Panc1 (cell line): ENCODE measurements at regions of chr15 and their contacts with region 1.

Region 1: GRCh38 chr15:74768771-74769342 is 13.0 kb upstream of the CSK start:
- DNase-seq: no peak
- ATAC-seq: peak; percentile 69
- H3K4me3 ChIP-seq: no peak overlapping the region; a peak in 1 of 4 replicates
- H3K27ac ChIP-seq: no peak overlapping the region
- H3K4me1 ChIP-seq: no peaks in the 10 kb centered on the region; the same call in 1 of the 2 replicates
- H3K27me3 ChIP-seq: no peaks in the 10 kb centered on the region
- CTCF ChIP-seq: peak; percentile 89

Region 2: DNA sequence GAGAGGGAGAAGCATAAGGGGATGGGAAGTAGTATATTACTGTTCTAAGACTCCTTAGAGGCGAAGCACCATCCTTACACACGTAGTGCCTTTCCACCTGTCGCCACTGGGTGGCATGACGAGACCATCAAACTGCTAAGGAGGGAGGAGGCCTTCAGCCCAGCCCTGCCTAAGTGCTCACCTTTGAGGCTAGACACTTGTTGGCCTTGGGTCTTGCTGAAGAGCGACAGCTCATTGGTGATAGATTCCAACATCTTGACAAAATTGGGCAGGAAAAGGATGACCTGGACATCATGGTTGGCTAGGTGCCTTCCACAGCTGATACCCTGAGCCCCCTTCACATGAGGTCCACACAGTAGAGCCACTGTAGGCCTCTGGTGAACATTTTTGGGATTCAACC is 133.6 kb before region 1 on chr15:
- CTCF ChIA-PET with region 1: interaction called, 106 read pairs
- POLR2A ChIA-PET with region 1: no interaction called
- in situ Hi-C with region 1: loop called (anchors 25 kb)
- intact Hi-C with region 1: loop called (anchors 1 kb)
- DNase-seq: peak; percentile 69
- ATAC-seq: peak; percentile 84
- H3K4me3 ChIP-seq: no peak overlapping the region
- H3K27ac ChIP-seq: no peak overlapping the region
- H3K4me1 ChIP-seq: no peaks in the 10 kb centered on the region
- H3K27me3 ChIP-seq: no peaks in the 10 kb centered on the region
- CTCF ChIP-seq: peak; percentile 90

Region 3: DNA sequence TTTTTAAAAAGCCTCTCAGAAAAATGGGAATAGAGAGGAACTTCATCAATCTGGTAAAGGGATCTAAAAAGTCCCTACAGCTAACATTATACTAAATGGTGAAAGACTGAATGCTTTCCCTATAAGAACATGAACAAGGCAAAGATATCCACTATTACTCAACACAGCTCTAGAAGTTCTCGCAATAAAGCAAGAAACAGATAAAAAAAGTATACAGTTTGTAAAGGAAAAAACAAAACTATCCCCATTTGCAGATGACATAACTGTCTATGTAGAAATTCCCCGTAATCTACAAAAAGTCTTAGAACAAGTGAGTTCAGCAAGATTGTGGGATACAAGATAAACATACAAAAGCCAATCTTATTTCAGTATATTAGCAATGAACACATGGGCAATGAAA is 88.4 kb before region 1 on chr15:
- CTCF ChIA-PET with region 1: interaction called, 14 read pairs
- POLR2A ChIA-PET with region 1: no interaction called
- in situ Hi-C with region 1: no loop called
- intact Hi-C with region 1: no loop called
- DNase-seq: no peak
- ATAC-seq: no peak
- H3K4me3 ChIP-seq: no peak overlapping the region
- H3K27ac ChIP-seq: no peak overlapping the region
- H3K4me1 ChIP-seq: no peaks in the 10 kb centered on the region
- H3K27me3 ChIP-seq: no peaks in the 10 kb centered on the region
- CTCF ChIP-seq: no peak

Region 4: GRCh38 chr15:74781431-74782258 is 12.8 kb after region 1 on chr15 and contains the start of gene CSK:
- CTCF ChIA-PET with region 1: interaction called, 10 read pairs
- POLR2A ChIA-PET with region 1: no interaction called
- in situ Hi-C with region 1: no loop called
- intact Hi-C with region 1: no loop called
- DNase-seq: no peak
- ATAC-seq: peak; percentile 88
- H3K4me3 ChIP-seq: peak within 1 kb of the TSS; percentile 87 to 90
- H3K27ac ChIP-seq: peak within 1 kb of the TSS; percentile 87
- H3K4me1 ChIP-seq: peaks cover 43% of the 10 kb centered on the region
- H3K27me3 ChIP-seq: no peaks in the 10 kb centered on the region
- CTCF ChIP-seq: peak; percentile 99
- total RNA-seq, gene CSK: 81.4 TPM

Region 5: DNA sequence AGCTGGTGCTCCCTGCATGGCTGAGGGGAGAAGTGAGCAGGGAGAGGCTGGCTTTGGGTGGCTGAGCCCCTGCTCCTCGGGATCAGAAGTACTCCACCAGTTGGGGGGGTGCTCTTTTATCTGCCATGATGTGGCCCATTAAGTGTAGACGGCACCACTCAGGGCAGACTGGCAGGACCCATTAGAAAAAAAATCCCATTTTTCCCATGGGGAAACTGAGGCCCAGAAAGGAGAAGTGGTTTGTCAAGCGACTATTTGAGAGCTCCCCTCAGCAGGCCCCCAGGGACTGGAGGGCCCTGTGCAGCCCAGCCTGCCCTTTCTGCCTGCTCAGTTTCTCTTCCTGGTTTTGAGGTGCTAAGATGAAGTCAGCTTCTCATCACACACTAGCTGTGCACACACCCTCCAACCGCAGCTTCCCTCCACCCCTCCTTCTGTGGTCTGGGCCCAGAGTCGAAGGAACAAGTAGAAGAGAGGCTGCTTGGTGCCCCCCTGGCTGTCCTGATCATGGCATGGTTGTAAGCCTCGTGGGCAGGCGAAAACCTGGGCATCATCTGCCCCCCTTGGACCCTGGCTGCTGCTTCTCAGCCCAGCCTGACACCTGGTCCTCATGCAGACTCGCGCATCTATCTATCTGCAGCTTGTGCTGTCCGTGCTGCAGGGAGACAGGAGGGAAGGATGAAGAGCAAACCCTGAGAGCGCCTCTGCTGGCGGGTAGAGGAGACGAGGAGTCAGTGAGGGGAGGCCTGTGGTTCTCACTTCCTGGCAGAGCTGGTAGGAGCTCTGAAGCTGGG is 18.6 kb after region 1 on chr15:
- CTCF ChIA-PET with region 1: interaction called, 10 read pairs
- POLR2A ChIA-PET with region 1: no interaction called
- in situ Hi-C with region 1: no loop called
- intact Hi-C with region 1: no loop called
- DNase-seq: peak; percentile 24
- ATAC-seq: peak; percentile 87
- H3K4me3 ChIP-seq: no peak overlapping the region
- H3K27ac ChIP-seq: no peak overlapping the region
- H3K4me1 ChIP-seq: peaks cover 60% of the 10 kb centered on the region
- H3K27me3 ChIP-seq: no peaks in the 10 kb centered on the region
- CTCF ChIP-seq: peak; percentile 87

Region 6: DNA sequence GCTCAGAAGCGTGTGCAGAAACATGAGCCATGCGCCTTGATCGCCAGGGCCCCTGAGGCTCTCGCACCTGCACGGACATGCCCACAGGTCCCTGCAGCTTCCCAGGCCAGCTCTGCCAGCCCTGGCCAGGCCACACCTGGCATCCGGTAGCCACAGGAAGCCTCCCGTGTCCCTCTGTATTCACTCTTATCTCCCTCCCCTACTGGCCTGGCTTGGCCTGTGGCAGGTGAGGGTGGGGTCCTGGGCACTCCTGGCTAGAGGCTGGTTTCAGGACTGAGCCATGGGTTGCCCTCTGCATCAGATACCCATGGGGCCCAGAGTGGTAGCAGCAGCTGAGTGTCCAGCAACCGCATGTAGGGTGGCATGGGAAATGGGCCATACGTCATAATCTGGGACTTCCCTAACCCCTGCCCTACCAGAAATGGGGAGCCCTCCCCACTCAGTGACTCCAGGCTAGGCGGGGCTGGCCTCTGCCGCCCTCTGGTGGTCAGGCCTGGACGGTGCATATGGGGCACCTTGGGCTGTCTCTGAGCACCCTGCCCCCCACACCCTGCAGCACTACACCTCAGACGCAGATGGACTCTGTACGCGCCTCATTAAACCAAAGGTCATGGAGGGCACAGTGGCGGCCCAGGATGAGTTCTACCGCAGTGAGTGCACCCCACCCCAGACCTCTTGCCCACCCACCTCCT is 31.1 kb after region 1 on chr15:
- CTCF ChIA-PET with region 1: interaction called, 4 read pairs
- POLR2A ChIA-PET with region 1: no interaction called
- in situ Hi-C with region 1: no loop called
- intact Hi-C with region 1: loop called (anchors 2 kb)
- DNase-seq: peak; percentile 45
- ATAC-seq: peak; percentile 95
- H3K4me3 ChIP-seq: no peak overlapping the region
- H3K27ac ChIP-seq: no peak overlapping the region
- H3K4me1 ChIP-seq: peaks cover 7% of the 10 kb centered on the region; the same call in 1 of the 2 replicates
- H3K27me3 ChIP-seq: no peaks in the 10 kb centered on the region
- CTCF ChIP-seq: peak; percentile 99

Region 7: DNA sequence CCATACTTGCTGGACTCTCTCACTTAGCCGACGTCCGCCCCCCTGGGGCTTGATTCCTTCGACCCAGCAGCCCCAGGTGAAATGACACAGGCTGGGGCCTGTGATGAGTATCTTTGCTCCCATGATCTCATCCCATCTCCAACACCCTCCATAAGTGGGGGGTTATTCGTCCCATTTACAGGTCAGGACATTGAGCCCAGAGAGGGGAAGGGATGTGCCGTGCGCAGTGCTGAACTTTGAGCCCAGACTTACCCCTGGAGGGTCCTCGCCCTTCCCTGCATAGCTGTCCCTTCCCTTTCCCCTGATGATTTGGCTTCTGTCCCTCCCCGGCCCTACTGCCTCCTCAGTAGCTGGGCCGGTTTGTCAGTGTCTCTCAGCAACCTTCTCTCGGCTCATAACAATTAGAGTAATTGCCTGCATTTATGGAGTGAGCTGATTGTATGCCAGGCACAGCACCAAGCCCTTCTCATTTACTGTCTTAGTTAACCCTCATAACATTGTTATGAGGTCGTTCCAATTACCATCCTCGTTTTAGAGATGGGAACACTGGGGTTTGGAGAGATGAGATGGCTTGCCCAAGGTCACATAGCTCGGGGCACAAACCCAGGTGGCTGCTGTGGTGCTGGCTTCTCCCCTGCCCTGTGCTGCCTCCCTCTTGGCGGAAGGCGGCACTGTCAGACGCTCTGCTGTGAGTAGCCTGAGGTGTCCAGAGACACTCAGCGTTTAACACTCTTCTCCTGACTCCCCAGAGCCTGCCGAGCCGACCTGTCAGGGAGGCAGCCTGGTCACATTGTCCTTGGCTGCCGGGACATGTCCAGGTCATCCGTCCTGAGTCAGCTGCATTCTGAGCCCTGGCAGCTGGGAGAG is 48.2 kb after region 1 on chr15:
- CTCF ChIA-PET with region 1: interaction called, 15 read pairs
- POLR2A ChIA-PET with region 1: no interaction called
- in situ Hi-C with region 1: no loop called
- intact Hi-C with region 1: no loop called
- DNase-seq: no peak
- ATAC-seq: peak; percentile 74
- H3K4me3 ChIP-seq: no peak overlapping the region
- H3K27ac ChIP-seq: no peak overlapping the region
- H3K4me1 ChIP-seq: peaks cover 4% of the 10 kb centered on the region; the same call in 1 of the 2 replicates
- H3K27me3 ChIP-seq: no peaks in the 10 kb centered on the region
- CTCF ChIP-seq: no peak; the same call in 1 of the 2 replicates